ENCODE measurements at regions of chr10 and their contacts with region 1.

Region 1: GRCh38 chr10:75226656-75227055 is 9.1 kb downstream of the COMTD1 start:
- DNase-seq: no peak
- H3K4me3 ChIP-seq: no peak overlapping the region
- H3K27ac ChIP-seq: peak overlapping the region; percentile 82
- H3K4me1 ChIP-seq: peaks cover 55% of the 10 kb centered on the region
- H3K27me3 ChIP-seq: no peaks in the 10 kb centered on the region
- CTCF ChIP-seq: no peak

Region 2: GRCh38 chr10:74988832-74989561 is 237.7 kb before region 1 on chr10:
- CTCF ChIA-PET with region 1: no interaction called
- POLR2A ChIA-PET with region 1: interaction called, 13 read pairs
- intact Hi-C with region 1: no loop called
- DNase-seq: no peak
- H3K4me3 ChIP-seq: no peak overlapping the region
- H3K27ac ChIP-seq: no peak overlapping the region
- H3K4me1 ChIP-seq: no peaks in the 10 kb centered on the region
- H3K27me3 ChIP-seq: no peaks in the 10 kb centered on the region
- CTCF ChIP-seq: no peak

Region 3: GRCh38 chr10:75203724-75204123 is 22.9 kb before region 1 on chr10:
- CTCF ChIA-PET with region 1: interaction called, 3 read pairs
- POLR2A ChIA-PET with region 1: interaction called, 16 read pairs
- intact Hi-C with region 1: no loop called
- DNase-seq: no peak
- H3K4me3 ChIP-seq: no peak overlapping the region
- H3K27ac ChIP-seq: no peak overlapping the region
- H3K4me1 ChIP-seq: peaks cover 27% of the 10 kb centered on the region
- H3K27me3 ChIP-seq: no peaks in the 10 kb centered on the region
- CTCF ChIP-seq: no peak

Measured in PC-9 (cell line).